Left colon (tissue), 2 donors: ENCODE measurements at regions of chr2 and their contacts with region 1.

Region 1: DNA sequence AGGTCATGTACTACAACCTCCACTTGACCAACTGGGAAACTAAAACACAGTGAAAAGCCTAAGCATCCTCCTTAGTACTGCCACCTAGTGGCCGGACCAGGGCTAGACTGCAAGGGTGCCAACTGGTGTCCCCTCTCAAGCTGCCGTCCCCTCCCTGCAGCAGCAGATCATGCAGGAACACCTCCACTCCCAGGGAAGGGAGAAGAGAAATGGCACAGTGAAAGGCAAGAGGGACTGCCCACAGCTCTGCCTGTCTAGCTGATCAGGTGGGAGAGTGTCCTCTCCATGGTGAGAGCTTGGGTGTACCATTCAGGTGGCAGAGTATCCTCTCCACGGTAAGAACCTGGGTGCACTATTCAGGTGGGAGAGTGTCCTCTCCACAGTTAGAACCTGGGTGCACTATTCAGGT is 78.1 kb downstream of the AAK1 start:
- DNase-seq: peak; percentile 46 to 64
- ATAC-seq: peak; percentile 33

Region 2: GRCh38 chr2:69717861-69718273 is 152.4 kb after region 1 on chr2:
- intact Hi-C with region 1: loop called (anchors 5 to 10 kb)
- DNase-seq: no peak
- ATAC-seq: no peak